HepG2 (cell line): ENCODE measurements at regions of chr7 and their contacts with region 1.

Region 1: GRCh38 chr7:43869006-43869866 is at the start of gene MRPS24:
- DNase-seq: peak; percentile 86
- ATAC-seq: peak; percentile 97
- H3K4me3 ChIP-seq: peak within 1 kb of the TSS; percentile 86 to 96 (median 87)
- H3K27ac ChIP-seq: peak within 1 kb of the TSS; percentile 67
- H3K4me1 ChIP-seq: peaks cover 18% of the 10 kb centered on the region
- H3K27me3 ChIP-seq: no peaks in the 10 kb centered on the region; a peak in 1 of 5 replicates
- CTCF ChIP-seq: peak; percentile 15; the same call in 1 of the 2 replicates
- EP300 ChIP-seq: 0 out of 4 replicates have a peak, but pooled peaks of 1 of the 2 experiments have one; percentile 39
- POLR2A ChIP-seq: peak; percentile 89 to 95
- RAD21 ChIP-seq: no peak
- total RNA-seq, gene MRPS24: 135 and 143 TPM in 2 replicates

Region 2: GRCh38 chr7:43824963-43825362 is 44.3 kb before region 1 on chr7:
- CTCF ChIA-PET with region 1: no interaction called
- POLR2A ChIA-PET with region 1: no interaction called
- in situ Hi-C with region 1: no loop called
- intact Hi-C with region 1: no loop called
- DNase-seq: no peak
- ATAC-seq: no peak
- H3K4me3 ChIP-seq: no peak overlapping the region
- H3K27ac ChIP-seq: no peak overlapping the region
- H3K4me1 ChIP-seq: peaks cover 22% of the 10 kb centered on the region
- H3K27me3 ChIP-seq: peaks cover 0 to 19% of the 10 kb centered on the region in 2 experiments; a peak in 1 of 5 replicates
- CTCF ChIP-seq: no peak
- EP300 ChIP-seq: no peak
- POLR2A ChIP-seq: no peak
- RAD21 ChIP-seq: no peak

Region 3: GRCh38 chr7:43905956-43906330 is 36.7 kb after region 1 on chr7:
- CTCF ChIA-PET with region 1: no interaction called
- POLR2A ChIA-PET with region 1: interaction called, 36 read pairs
- in situ Hi-C with region 1: no loop called
- intact Hi-C with region 1: loop called (anchors 2 kb)
- DNase-seq: peak; percentile 14
- ATAC-seq: peak; percentile 45
- H3K4me3 ChIP-seq: peak overlapping the region; percentile 70 to 87 (median 83)
- H3K27ac ChIP-seq: peak overlapping the region; percentile 78
- H3K4me1 ChIP-seq: peaks cover 36% of the 10 kb centered on the region
- H3K27me3 ChIP-seq: no peaks in the 10 kb centered on the region
- CTCF ChIP-seq: no peak
- EP300 ChIP-seq: no peak
- POLR2A ChIP-seq: no peak
- RAD21 ChIP-seq: no peak

Region 4: DNA sequence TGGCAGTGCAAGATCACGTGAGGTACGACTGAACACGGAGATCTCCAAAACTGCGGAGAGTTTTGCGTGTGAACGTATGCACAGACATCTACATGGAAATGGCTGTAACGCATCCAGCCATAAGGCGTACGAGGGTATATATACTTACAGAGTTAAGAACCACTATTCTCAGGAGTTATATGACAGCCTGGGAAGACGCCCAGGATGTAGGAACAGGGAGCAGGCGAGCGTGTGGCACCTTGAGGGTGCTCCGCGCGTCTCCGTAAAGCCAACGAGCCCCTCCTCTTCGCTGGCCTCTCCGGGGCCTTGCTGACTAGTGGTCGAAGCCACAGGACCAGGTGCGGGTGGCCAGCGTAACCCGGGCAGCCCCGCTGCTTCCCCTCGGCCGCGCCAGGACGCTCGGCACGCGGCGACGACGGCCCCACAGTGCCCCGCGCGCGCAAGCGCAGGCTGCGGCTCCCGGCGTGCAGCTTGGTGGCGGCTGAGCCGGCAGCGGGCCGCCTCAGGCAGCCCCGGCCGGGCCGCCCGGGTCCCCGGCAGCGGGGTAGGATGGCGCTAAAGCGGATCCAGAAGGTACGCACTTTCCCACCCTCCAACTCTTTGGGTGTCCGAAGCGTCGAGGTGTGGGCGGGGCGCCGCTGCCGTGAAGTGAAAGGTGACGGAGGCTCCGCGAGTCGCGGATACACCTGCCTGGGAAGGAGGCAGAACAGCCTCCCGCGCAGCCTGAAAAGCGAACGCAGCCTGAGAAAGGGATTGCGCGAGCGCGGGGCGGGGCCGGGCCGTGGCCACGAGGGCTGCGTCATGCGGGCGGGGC is 57.0 kb after region 1 on chr7 and contains the start of gene UBE2D4:
- CTCF ChIA-PET with region 1: no interaction called
- POLR2A ChIA-PET with region 1: interaction called, 10 read pairs
- in situ Hi-C with region 1: no loop called
- intact Hi-C with region 1: loop called (anchors 1 kb)
- DNase-seq: peak; percentile 67
- ATAC-seq: peak; percentile 97
- H3K4me3 ChIP-seq: peak within 1 kb of the TSS; percentile 44 to 64 (median 64)
- H3K27ac ChIP-seq: peak within 1 kb of the TSS; percentile 84
- H3K4me1 ChIP-seq: peaks cover 26% of the 10 kb centered on the region
- H3K27me3 ChIP-seq: no peaks in the 10 kb centered on the region
- CTCF ChIP-seq: 0 out of 2 replicates have a peak, but pooled peaks have one; percentile 49
- EP300 ChIP-seq: 0 out of 4 replicates have a peak, but pooled peaks of 1 of the 2 experiments have one; percentile 24
- POLR2A ChIP-seq: peak; percentile 95 to 96
- RAD21 ChIP-seq: 0 out of 2 replicates have a peak, but pooled peaks have one; percentile 46
- total RNA-seq, gene UBE2D4: 9.9 and 11.2 TPM in 2 replicates

Region 5: GRCh38 chr7:43954524-43955228 is 85.4 kb after region 1 on chr7:
- CTCF ChIA-PET with region 1: no interaction called
- POLR2A ChIA-PET with region 1: no interaction called
- in situ Hi-C with region 1: no loop called
- intact Hi-C with region 1: loop called (anchors 2 kb)
- DNase-seq: peak; percentile 61
- ATAC-seq: peak; percentile 99
- H3K4me3 ChIP-seq: no peak overlapping the region
- H3K27ac ChIP-seq: no peak overlapping the region
- H3K4me1 ChIP-seq: no peaks in the 10 kb centered on the region
- H3K27me3 ChIP-seq: no peaks in the 10 kb centered on the region
- CTCF ChIP-seq: peak; percentile 75
- EP300 ChIP-seq: no peak
- POLR2A ChIP-seq: no peak
- RAD21 ChIP-seq: peak; percentile 46; the same call in 1 of the 2 replicates